Activated CD4-positive, alpha-beta memory T cell treated with anti-CD3 and anti-CD28 coated beads for 36 hours (primary cell): ENCODE measurements at regions of chr17 and their contacts with region 1.

Region 1: GRCh38 chr17:7989781-7990655 is 12.4 kb upstream of the GUCY2D start:
- DNase-seq: peak; percentile 95
- H3K4me3 Mint-ChIP-seq: peak overlapping the region; percentile 51
- H3K27ac Mint-ChIP-seq: peak overlapping the region; percentile 66
- H3K4me1 Mint-ChIP-seq: peaks cover 22% of the 10 kb centered on the region
- H3K27me3 Mint-ChIP-seq: peaks cover under 1% of the 10 kb centered on the region

Region 2: GRCh38 chr17:7825206-7825990 is 164.6 kb before region 1 on chr17:
- CTCF ChIA-PET with region 1: interaction called, 17 read pairs
- POLR2A ChIA-PET with region 1: no interaction called
- intact Hi-C with region 1: loop called (anchors 1 kb)
- DNase-seq: no peak
- H3K4me3 Mint-ChIP-seq: no peak overlapping the region
- H3K27ac Mint-ChIP-seq: no peak overlapping the region
- H3K4me1 Mint-ChIP-seq: no peaks in the 10 kb centered on the region
- H3K27me3 Mint-ChIP-seq: peaks cover 1% of the 10 kb centered on the region

Region 3: GRCh38 chr17:7856883-7857723 is 132.9 kb before region 1 on chr17 and contains the start of gene NAA38:
- CTCF ChIA-PET with region 1: interaction called, 134 read pairs
- POLR2A ChIA-PET with region 1: interaction called, 6 read pairs
- intact Hi-C with region 1: loop called (anchors 2 kb)
- DNase-seq: peak; percentile 97
- H3K4me3 Mint-ChIP-seq: no peak within 1 kb of the TSS
- H3K27ac Mint-ChIP-seq: no peak within 1 kb of the TSS
- H3K4me1 Mint-ChIP-seq: peaks cover 24% of the 10 kb centered on the region
- H3K27me3 Mint-ChIP-seq: no peaks in the 10 kb centered on the region
- total RNA-seq, gene NAA38: 68.2 to 74.7 TPM

Region 4: DNA sequence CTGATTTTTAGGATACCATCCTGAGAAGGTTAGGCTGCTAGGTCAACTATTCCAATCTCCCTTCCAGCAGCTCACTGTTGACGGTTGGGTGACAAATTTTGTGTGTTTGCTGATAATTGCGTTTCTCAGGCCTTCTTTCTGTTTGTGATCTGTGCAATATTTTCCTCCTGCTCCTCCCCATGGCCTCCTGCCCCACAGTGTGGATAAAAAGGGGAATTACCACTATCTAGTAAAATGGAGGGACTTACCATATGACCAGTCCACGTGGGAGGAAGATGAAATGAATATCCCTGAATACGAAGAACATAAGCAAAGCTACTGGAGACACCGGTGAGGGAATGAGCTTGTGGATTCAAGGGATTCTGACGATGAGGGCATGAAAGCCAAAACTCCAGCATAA is 92.2 kb before region 1 on chr17:
- CTCF ChIA-PET with region 1: interaction called, 12 read pairs
- POLR2A ChIA-PET with region 1: interaction called, 3 read pairs
- intact Hi-C with region 1: no loop called
- DNase-seq: peak; percentile 47
- H3K4me3 Mint-ChIP-seq: no peak overlapping the region
- H3K27ac Mint-ChIP-seq: peak overlapping the region; percentile 73
- H3K4me1 Mint-ChIP-seq: peaks cover 17% of the 10 kb centered on the region
- H3K27me3 Mint-ChIP-seq: no peaks in the 10 kb centered on the region

Region 5: DNA sequence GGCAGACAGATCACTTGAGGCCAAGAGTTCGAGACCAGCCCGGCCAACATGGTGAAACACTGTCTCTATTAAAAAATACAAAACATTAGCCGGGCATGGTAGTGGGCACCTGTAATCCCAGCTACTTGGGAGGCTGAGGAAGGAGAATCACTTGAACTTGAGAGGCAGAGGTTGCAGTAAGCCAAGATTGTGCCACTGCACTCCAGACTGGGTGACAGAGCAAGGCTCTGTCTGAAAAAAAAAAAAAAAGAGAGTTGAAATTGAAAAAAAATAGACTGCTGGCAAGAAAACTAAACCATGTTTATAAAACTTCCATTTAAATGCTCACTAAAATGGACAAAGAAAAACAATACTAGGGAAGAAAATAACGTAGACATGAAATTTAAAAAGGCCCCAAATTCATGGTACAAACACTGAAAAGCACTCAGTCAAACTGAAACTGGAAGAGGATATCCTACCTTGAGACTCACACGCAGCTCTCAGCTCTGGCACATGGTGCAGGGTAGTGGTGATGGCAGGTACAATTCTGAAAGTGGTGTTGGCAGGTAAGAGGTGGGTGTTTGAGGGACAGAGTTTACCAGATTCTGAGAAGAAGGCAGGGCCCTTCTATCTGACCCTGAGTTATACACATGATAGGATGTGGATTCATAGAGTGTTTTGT is 38.7 kb before region 1 on chr17:
- CTCF ChIA-PET with region 1: interaction called, 6 read pairs
- POLR2A ChIA-PET with region 1: no interaction called
- intact Hi-C with region 1: loop called (anchors 2 kb)
- DNase-seq: peak; percentile 69
- H3K4me3 Mint-ChIP-seq: no peak overlapping the region
- H3K27ac Mint-ChIP-seq: peak overlapping the region; percentile 72
- H3K4me1 Mint-ChIP-seq: peaks cover 25% of the 10 kb centered on the region
- H3K27me3 Mint-ChIP-seq: no peaks in the 10 kb centered on the region

Region 6: DNA sequence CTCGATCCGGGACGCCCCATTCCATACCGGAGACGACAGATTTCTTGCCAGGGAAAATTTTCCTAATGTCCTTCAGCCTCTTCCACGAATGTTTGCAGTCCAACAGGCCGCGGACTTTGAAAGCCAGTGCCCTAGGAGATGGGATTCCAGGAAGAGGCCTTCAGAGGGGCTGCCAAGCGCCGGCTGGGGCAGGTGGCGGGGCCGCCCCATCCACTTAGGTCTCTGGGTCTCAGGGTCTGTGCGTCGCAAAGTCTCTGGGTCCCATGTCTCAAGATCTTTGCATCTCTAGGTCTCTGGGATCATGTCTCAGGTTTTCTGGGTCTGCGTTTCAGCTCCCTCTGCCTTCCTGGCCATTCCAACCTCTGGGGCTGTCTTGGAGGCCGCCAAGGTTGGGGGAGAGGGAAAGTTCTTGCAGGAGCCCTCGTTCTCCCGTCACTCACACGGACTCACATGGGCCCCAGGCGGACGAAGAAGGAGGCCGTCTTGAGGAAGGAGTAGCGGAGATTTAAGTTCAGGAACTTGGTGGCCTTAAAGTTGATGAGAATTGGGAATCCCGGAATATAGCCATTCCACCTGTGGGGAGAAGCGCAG is 90.3 kb after region 1 on chr17:
- CTCF ChIA-PET with region 1: no interaction called
- POLR2A ChIA-PET with region 1: no interaction called
- intact Hi-C with region 1: no loop called
- DNase-seq: no peak
- H3K4me3 Mint-ChIP-seq: peak overlapping the region; percentile 93
- H3K27ac Mint-ChIP-seq: peak overlapping the region; percentile 81
- H3K4me1 Mint-ChIP-seq: peaks cover 13% of the 10 kb centered on the region
- H3K27me3 Mint-ChIP-seq: peaks cover 4% of the 10 kb centered on the region